H1 (cell line): ENCODE measurements at regions of chr6 and their contacts with region 1.

Region 1: DNA sequence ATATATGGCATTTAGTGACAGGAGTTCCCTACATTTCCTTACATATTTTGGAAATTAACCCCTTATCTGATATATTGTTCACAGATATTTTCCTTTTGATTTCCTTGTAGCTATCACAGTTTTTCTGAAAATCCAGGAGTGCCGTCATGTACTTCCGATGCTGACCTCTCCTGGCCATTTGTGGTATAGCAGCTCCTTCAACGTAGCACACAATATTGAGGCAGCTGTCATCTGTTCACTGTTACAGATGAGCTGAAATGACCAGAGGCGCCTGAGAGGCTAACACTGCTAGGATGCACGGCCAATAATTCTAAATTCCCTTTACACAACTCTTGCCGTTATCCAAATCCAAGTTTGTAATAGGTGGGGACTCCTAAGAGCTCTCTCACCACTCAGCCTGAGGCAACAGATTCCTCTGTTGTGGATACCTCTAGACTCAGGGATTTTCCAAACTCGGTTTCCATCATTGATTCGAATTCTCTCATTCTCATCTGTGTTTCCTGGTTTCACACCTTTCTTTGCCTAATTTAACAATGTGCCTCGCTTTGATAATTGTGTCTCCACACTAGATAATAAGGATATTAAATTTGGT is 53.0 kb downstream of the MMUT start:
- DNase-seq: peak; percentile 25 to 89
- H3K4me3 ChIP-seq: no peak overlapping the region
- H3K27ac ChIP-seq: no peak overlapping the region
- H3K4me1 ChIP-seq: no peaks in the 10 kb centered on the region
- H3K27me3 ChIP-seq: no peaks in the 10 kb centered on the region
- CTCF ChIP-seq: peak; percentile 14 to 80 (median 63)
- EP300 ChIP-seq: no peak
- POLR2A ChIP-seq: no peak
- RAD21 ChIP-seq: peak; percentile 86 to 88

Region 2: GRCh38 chr6:49423817-49424216 is 13.8 kb after region 1 on chr6:
- CTCF ChIA-PET with region 1: interaction called, 18 read pairs
- POLR2A ChIA-PET with region 1: no interaction called
- DNase-seq: no peak
- H3K4me3 ChIP-seq: no peak overlapping the region
- H3K27ac ChIP-seq: no peak overlapping the region
- H3K4me1 ChIP-seq: no peaks in the 10 kb centered on the region
- H3K27me3 ChIP-seq: no peaks in the 10 kb centered on the region
- CTCF ChIP-seq: peak in 1 of 3 experiments; percentile 8; a peak in 2 of 4 replicates
- EP300 ChIP-seq: no peak
- POLR2A ChIP-seq: no peak
- RAD21 ChIP-seq: peak; percentile 50 to 63

Region 3: DNA sequence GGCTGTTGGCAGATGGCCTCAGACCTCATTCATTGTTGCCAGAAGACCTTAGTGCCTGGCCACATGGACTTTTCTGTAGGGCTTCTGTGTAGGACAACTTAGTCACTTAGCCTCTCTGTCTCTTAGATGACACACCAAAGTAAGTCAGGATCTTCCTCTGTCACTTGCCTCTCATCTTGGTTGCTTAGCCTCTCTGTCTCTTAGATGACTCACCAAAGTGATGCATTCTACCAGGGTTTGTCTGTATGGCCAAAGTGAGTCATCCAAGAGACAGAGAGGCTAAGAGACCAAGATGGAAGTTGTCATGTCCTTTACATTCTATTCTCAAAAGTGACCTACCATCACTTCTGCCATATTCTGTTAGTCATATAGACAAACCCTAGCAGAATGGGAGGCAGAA is 895.6 kb after region 1 on chr6:
- CTCF ChIA-PET with region 1: no interaction called
- POLR2A ChIA-PET with region 1: no interaction called
- DNase-seq: no peak
- H3K4me3 ChIP-seq: no peak overlapping the region
- H3K27ac ChIP-seq: no peak overlapping the region
- H3K4me1 ChIP-seq: no peaks in the 10 kb centered on the region
- H3K27me3 ChIP-seq: peaks cover 0 to 7% (median 0%) of the 10 kb centered on the region in 4 experiments; a peak in 4 of 7 replicates
- CTCF ChIP-seq: no peak
- EP300 ChIP-seq: no peak
- POLR2A ChIP-seq: no peak
- RAD21 ChIP-seq: no peak